ENCODE measurements at regions of chr15 and their contacts with region 1.

Region 1: GRCh38 chr15:47897525-47897924 is 180.2 kb downstream of the SEMA6D start:
- DNase-seq: no peak
- H3K4me3 ChIP-seq: no peak overlapping the region
- H3K27ac ChIP-seq: no peak overlapping the region
- H3K4me1 ChIP-seq: no peaks in the 10 kb centered on the region
- H3K27me3 ChIP-seq: no peaks in the 10 kb centered on the region
- CTCF ChIP-seq: no peak

Region 2: DNA sequence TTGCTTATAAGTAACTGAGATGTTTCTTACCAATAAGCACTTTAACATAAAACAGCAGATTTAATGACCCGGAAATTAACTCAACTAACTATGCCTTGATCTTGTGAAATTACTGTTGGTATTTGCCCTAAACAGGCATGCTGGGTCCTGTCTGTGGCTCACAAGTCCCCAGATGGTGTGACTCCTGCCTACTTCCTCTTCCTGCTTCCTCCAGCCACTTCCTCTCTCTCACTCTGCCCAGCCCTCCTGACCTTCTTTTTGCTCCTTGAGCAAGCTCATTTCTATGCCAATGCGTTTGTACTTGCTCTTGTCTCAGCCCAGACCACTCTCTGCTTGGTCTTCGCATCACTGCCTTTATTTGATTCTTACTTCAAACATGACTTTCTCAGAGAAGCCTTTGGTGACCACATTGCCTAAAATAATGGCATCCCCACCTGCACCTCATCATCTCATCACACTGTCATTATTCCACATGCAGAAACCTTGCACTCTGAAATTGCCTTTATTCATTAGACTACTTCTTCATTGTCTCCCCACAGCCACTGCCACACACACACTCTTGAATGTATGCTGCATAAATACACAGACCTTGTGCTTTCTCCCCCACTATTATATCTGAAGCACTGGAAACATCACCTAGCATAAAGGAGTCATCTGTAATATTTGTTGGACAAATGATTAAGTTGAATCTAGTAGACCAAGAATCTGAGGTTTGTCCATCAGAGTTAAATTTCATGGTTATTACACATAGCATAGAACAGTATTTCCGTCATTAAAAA is 436.5 kb before region 1 on chr15:
- intact Hi-C with region 1: loop called (anchors 5 kb)
- DNase-seq: no peak
- H3K4me3 ChIP-seq: no peak overlapping the region
- H3K27ac ChIP-seq: no peak overlapping the region
- H3K4me1 ChIP-seq: no peaks in the 10 kb centered on the region
- H3K27me3 ChIP-seq: no peaks in the 10 kb centered on the region
- CTCF ChIP-seq: no peak

Region 3: DNA sequence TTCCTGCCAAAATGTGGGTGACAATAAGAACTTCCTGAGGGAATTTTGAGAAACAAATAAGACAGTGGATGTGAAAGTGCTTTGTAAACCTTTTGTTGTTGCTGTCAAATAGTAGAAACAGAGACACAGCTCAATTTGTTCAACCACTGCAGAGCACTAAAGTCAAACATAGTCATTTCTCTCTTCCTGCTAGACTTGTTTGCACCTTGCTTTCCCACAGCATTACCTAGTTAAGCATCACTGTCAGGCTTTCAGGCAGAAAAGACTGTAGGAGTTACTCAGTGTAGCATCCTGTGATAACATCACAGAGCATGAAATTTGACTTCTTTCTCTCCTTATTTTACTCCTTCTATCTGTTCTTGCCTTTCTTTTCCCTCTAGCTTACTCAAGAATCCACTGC is 335.7 kb after region 1 on chr15:
- intact Hi-C with region 1: no loop called
- DNase-seq: no peak
- H3K4me3 ChIP-seq: no peak overlapping the region
- H3K27ac ChIP-seq: no peak overlapping the region
- H3K4me1 ChIP-seq: no peaks in the 10 kb centered on the region
- H3K27me3 ChIP-seq: no peaks in the 10 kb centered on the region
- CTCF ChIP-seq: no peak

Measured in colonic mucosa (tissue), 4 donors.